ENCODE measurements at regions of chrX and their contacts with region 1.

Region 1: GRCh38 chrX:120000490-120001246 is 57.1 kb upstream of the NKAP start:
- DNase-seq: no peak
- H3K4me3 Mint-ChIP-seq: no peak overlapping the region
- H3K27ac Mint-ChIP-seq: no peak overlapping the region
- H3K4me1 Mint-ChIP-seq: no peaks in the 10 kb centered on the region
- H3K27me3 Mint-ChIP-seq: peaks cover 49% of the 10 kb centered on the region

Region 2: DNA sequence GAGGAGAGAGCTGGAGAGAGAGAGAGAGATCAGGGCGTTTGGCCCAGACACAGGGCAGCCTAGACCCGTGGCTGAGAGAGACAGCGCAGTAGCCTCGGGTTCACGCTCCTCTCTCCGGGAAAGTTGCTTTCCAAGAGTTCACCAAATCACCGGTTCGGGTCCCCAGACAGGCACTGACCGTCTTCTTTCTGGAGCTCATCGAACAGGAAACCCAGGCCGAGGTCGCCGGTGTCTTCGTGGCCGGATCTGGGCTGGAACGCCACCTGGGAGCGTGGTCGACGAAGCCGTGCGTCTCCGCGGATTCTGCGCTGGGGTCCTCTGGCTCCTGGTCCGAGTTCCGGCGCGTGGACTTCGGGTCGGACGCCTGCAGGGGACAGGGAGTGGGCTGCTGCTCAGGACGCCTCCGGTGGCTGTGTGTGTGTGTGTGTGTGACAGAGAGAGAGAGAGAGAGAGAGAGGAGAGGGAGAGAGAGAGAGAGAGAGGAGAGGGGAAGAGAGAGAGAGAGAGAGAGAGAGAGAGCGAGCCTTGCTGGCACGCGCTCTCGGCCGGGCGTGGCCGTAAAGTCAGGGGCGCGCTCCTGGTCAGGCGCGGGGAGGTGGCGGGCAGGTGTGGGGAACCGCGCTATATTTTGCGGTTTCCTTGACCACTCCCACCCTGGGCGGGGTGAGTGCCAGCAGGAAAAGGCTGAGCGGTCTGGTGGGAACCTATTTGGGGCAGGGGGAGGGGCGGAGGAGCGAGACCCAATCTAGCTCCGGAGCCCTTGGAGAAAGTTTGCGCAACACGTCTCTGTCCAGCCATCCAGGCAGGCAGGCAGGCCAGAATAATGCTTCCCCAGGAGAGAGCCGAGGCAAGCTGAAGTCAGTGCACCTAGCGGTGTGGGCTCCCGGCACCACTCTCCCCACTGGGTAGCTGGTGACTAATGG is 14.7 kb after region 1 on chrX:
- intact Hi-C with region 1: loop called (anchors 2 kb)
- DNase-seq: no peak
- H3K4me3 Mint-ChIP-seq: peak overlapping the region; percentile 53
- H3K27ac Mint-ChIP-seq: no peak overlapping the region
- H3K4me1 Mint-ChIP-seq: no peaks in the 10 kb centered on the region
- H3K27me3 Mint-ChIP-seq: peaks cover 47% of the 10 kb centered on the region

Measured in activated T-helper 1 cell treated with anti-CD3 and anti-CD28 coated beads, Interleukin-12 subunit alpha, Interleukin-12 subunit beta, Interleukin-2, Interleukin-4 antibody, amounts not matched to agents 30 ng/mL and 10 ng/mL and 1 ng/mL, durations not matched to agents 14 hours and 24 hours and 36 hours (primary cell).